AG04450 (cell line): ENCODE measurements at regions of chr17 and their contacts with region 1.

Region 1: DNA sequence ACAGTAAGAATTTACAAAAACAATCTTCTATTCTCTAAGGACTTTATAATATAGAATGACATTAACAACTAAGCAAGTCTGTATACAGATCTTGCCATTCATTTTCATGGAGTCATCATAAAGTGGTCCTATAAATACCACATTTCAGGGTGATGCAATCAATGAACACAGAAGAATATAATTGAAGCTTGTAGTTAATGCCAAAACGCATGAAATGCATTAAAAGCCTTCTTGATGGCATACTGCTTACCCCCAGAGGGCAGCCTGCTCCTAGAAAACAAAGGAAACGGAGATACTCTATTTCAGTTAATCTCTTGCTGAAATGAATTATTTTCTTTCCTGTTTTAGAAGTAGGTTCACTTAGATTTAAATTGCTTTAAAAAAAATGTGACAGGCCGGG is 45.2 kb upstream of the STAC2 start:
- DNase-seq: peak; percentile 29
- H3K4me3 ChIP-seq: no peak overlapping the region
- H3K27ac ChIP-seq: no peak overlapping the region
- H3K27me3 ChIP-seq: no peaks in the 10 kb centered on the region
- CTCF ChIP-seq: peak; percentile 72

Region 2: GRCh38 chr17:38752119-38752929 is 518.6 kb before region 1 on chr17 and contains the start of gene PSMB3:
- CTCF ChIA-PET with region 1: no interaction called
- POLR2A ChIA-PET with region 1: no interaction called
- DNase-seq: peak; percentile 97
- H3K4me3 ChIP-seq: peak within 1 kb of the TSS; percentile 99
- H3K27ac ChIP-seq: peak within 1 kb of the TSS; percentile 70
- H3K27me3 ChIP-seq: no peaks in the 10 kb centered on the region
- CTCF ChIP-seq: no peak
- polyA plus RNA-seq, gene PSMB3: 234 and 276 TPM in 2 replicates

Region 3: DNA sequence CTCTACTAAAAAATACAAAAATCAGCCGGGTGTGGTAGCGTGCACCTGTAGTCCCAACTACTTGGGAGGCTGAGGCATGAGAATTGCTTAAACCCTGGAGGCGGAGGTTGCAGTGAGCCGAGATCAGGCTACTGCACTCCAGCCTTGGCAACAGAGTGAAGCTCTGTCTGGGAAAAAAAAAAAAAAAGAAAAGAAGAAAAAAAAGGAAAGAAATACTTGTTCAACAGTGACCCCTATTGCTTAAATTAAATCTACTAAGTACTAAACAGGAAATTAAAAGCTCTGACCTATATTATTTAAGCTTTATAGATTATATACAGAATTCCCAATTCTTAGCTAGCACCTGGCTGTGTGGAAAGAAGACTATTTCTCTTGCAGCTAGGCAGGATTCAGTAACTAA is 81.6 kb after region 1 on chr17:
- CTCF ChIA-PET with region 1: interaction called, 11 read pairs
- POLR2A ChIA-PET with region 1: no interaction called
- DNase-seq: no peak
- H3K4me3 ChIP-seq: no peak overlapping the region
- H3K27ac ChIP-seq: no peak overlapping the region
- H3K27me3 ChIP-seq: no peaks in the 10 kb centered on the region
- CTCF ChIP-seq: no peak